Head of caudate nucleus (tissue), 42 donors: ENCODE measurements at regions of chr10 and their contacts with region 1.

Region 1: DNA sequence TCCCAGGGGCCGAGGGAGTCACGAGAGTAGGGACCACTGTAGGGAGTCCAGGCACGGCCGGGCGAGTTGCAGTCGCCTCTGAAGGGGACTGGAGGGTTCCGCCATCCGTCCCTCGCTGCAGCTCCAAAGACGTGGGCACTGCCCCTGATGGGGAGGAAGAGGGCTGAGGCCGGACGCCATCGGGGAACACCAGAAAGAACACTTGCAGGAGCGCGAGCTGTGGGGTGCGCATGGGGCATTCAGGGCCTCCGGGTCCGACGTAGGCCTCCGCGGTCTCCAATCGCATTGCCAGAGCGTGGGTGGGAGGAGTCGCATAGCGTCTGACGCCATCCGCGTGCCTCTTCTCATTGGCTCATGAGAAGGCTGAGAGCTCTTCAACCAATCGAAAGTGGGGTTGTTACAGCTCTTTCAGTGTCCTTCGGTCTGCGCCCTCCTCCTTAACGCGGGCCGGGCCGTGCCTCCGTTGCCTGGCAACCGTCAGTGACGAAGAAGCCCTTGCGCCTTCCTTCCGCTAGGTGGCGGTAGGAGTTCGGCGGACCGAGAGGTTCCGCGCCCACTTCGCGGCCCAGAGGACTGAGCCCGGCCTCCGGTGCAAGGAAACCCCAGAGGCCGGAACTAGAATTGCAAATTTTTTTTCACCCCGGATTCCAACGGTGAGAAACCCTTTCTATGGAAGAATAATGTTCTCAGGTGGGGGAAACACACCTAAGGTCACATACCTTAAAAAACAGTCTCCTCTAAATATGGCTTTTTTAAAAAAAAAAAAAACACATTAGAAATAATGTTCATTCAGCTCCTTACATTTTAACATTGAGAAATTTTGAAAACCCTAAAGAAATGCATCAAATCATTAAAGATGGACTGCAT is at the start of gene TCTN3:
- DNase-seq: peak; percentile 92 to 99 (median 98)

Region 2: DNA sequence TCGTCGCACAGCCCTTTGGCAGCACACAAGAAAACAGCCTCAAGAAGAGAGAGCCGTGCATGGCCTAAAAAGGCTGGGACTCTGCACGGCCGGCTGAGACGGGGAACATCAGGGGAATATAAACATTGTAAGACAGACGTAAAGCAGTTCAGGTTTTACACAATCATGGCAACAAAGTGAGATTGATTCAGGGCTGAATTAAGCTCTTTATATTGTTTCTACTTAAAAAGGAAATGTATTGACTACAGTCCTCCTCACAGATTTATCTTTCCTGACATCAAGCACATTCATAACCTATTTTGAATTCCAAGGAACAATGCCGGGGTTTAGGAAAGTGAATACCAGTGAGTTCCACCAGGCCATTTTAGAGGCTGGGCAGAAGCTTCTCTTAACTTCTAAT is 157.9 kb before region 1 on chr10:
- intact Hi-C with region 1: no loop called
- DNase-seq: no peak

Region 3: DNA sequence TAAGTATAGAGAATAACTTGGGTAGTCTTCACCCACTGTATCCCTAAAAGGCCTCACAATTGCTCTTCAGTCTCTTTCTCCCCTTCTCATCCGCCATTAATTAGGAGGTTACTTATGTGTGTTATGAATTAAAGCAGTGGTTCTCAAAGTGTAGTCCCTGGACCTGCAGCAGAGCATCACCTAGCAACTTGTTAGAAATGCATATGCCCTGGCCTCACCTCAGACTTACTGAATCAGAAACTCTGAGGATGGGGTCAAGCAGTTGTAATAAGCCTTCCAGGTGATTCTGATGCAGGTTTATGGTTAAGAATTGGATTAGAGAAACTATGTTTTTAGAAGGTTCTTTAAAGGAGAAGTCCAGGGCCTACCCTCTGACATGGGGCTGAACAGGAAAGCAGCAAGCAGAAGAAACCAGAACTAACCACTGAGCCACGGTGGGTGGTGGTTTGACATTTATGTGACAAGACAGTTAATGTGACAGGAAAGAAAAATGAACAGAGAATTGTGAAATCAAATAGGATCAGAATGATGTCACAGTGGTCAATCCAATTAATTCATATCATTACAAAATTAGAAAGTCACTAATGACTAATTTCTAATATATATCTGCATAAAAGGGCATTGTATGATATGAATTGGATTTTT is 99.6 kb after region 1 on chr10:
- intact Hi-C with region 1: no loop called
- DNase-seq: peak in 3 of 42 donors; percentile 13 to 32 (median 21)

Region 4: DNA sequence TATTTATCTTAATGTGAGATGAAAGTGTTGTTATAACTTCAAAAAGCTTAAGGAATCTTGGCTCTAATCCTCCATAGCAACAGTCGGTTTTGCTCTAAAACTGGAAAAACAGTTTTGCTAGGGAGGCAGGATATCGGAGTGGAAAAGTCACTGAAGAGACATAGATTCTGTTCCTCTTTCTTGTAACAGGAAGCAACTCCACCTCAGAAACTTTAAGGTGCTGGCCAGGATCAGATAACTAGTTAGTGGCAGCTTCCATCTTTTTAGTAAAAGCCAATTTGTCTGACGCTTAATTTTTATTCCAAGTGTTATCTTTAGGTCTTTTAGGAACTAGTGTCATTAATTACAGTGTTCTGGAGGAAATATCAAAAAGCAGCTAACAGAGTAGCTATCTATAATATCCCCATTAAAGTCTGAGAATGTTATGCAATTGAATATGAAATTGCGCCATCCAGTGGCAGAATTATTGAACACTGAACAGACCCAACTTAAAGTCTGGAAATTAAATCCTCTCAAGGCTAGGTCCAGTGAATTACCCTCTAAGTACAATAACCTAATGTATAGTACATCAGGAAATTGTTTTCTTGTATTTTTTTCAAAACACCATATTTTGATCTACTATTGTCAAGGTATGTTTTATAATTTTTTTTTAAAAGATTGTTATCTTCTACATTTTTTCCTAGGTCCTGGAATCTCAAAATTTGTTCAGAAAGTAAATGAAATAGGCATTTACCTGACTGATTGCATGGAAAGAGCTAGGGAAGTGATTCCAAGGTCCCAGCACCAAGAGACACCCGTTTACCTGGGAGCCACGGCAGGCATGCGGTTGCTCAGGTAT is 148.0 kb after region 1 on chr10:
- intact Hi-C with region 1: loop called (anchors 2 kb)
- DNase-seq: peak in 17 of 42 donors; percentile 12 to 75 (median 38)

Region 5: GRCh38 chr10:96043033-96043932 is 349.4 kb after region 1 on chr10 and contains the start of gene CCNJ:
- intact Hi-C with region 1: loop called (anchors 5 kb)
- DNase-seq: peak; percentile 66 to 93 (median 87)

Region 6: GRCh38 chr10:96129387-96130325 is 435.8 kb after region 1 on chr10 and contains the start of gene ZNF518A:
- intact Hi-C with region 1: loop called (anchors 10 kb)
- DNase-seq: peak; percentile 78 to 96 (median 92)